ENCODE measurements at regions of chr10 and their contacts with region 1.

Region 1: GRCh38 chr10:89553064-89553734 is 17.8 kb upstream of the SLC16A12 start:
- DNase-seq: peak; percentile 84
- H3K4me3 Mint-ChIP-seq: no peak overlapping the region
- H3K27ac Mint-ChIP-seq: peak overlapping the region; percentile 90
- H3K4me1 Mint-ChIP-seq: peaks cover 47% of the 10 kb centered on the region
- H3K27me3 Mint-ChIP-seq: no peaks in the 10 kb centered on the region
- CTCF ChIP-seq: no peak

Region 2: GRCh38 chr10:89426230-89426868 is 126.8 kb before region 1 on chr10:
- CTCF ChIA-PET with region 1: interaction called, 16 read pairs
- POLR2A ChIA-PET with region 1: interaction called, 9 read pairs
- intact Hi-C with region 1: loop called (anchors 1 kb)
- DNase-seq: peak; percentile 70
- H3K4me3 Mint-ChIP-seq: no peak overlapping the region
- H3K27ac Mint-ChIP-seq: no peak overlapping the region
- H3K4me1 Mint-ChIP-seq: peaks cover 26% of the 10 kb centered on the region
- H3K27me3 Mint-ChIP-seq: no peaks in the 10 kb centered on the region
- CTCF ChIP-seq: peak; percentile 74

Region 3: DNA sequence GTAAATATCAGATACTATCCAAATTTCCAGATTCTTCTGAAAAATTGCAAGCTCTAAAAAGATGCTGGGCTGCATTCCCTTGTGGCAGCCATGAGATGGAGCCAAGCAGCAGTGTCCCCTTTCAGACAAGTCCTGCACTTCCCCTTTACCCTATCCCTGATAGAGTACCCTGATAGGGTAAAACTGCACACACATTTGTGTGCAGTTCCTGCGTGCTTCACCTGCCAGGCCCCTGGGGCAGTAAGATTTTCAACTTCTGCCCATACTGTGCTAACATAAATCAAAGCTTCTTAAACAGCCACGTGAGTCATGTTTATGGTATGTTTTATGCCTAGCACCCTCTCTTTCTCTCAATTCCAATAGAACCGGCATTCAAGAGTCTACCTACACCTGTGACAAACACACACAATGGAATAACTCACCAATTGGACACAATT is 86.6 kb before region 1 on chr10:
- CTCF ChIA-PET with region 1: interaction called, 65 read pairs
- POLR2A ChIA-PET with region 1: interaction called, 48 read pairs
- intact Hi-C with region 1: no loop called
- DNase-seq: peak; percentile 77
- H3K4me3 Mint-ChIP-seq: no peak overlapping the region
- H3K27ac Mint-ChIP-seq: peak overlapping the region; percentile 68
- H3K4me1 Mint-ChIP-seq: peaks cover 37% of the 10 kb centered on the region
- H3K27me3 Mint-ChIP-seq: no peaks in the 10 kb centered on the region
- CTCF ChIP-seq: peak; percentile 43

Region 4: GRCh38 chr10:89481662-89482061 is 71.5 kb before region 1 on chr10:
- CTCF ChIA-PET with region 1: no interaction called
- POLR2A ChIA-PET with region 1: interaction called, 22 read pairs
- intact Hi-C with region 1: no loop called
- DNase-seq: peak; percentile 86
- H3K4me3 Mint-ChIP-seq: peak overlapping the region; percentile 28
- H3K27ac Mint-ChIP-seq: peak overlapping the region; percentile 99
- H3K4me1 Mint-ChIP-seq: peaks cover 52% of the 10 kb centered on the region
- H3K27me3 Mint-ChIP-seq: no peaks in the 10 kb centered on the region
- CTCF ChIP-seq: no peak

Region 5: DNA sequence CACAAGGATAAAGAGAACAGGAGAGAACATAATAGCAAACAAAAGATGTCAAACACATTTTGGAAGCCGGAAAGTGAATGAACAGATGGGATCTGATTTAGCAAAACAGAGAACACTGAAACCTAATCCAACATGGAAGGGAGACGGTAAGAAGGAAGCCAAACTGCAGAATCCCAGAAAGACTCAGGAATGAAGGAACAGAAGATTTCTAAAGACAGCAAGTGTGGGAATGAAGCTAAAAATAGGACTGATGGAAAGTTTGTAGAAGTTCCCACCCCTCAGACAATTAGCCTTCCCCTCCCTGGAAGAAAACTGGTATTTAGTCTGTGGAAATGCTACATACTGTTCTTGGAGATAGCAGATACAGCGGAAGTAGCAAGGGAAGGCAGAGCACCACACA is 58.6 kb before region 1 on chr10:
- CTCF ChIA-PET with region 1: no interaction called
- POLR2A ChIA-PET with region 1: no interaction called
- intact Hi-C with region 1: loop called (anchors 5 kb)
- DNase-seq: no peak
- H3K4me3 Mint-ChIP-seq: no peak overlapping the region
- H3K27ac Mint-ChIP-seq: no peak overlapping the region
- H3K4me1 Mint-ChIP-seq: no peaks in the 10 kb centered on the region
- H3K27me3 Mint-ChIP-seq: no peaks in the 10 kb centered on the region
- CTCF ChIP-seq: no peak

Region 6: GRCh38 chr10:89502556-89502955 is 50.6 kb before region 1 on chr10:
- CTCF ChIA-PET with region 1: interaction called, 5 read pairs
- POLR2A ChIA-PET with region 1: interaction called, 11 read pairs
- intact Hi-C with region 1: no loop called
- DNase-seq: peak; percentile 91
- H3K4me3 Mint-ChIP-seq: no peak overlapping the region
- H3K27ac Mint-ChIP-seq: peak overlapping the region; percentile 43
- H3K4me1 Mint-ChIP-seq: peaks cover 25% of the 10 kb centered on the region
- H3K27me3 Mint-ChIP-seq: no peaks in the 10 kb centered on the region
- CTCF ChIP-seq: no peak

Region 7: DNA sequence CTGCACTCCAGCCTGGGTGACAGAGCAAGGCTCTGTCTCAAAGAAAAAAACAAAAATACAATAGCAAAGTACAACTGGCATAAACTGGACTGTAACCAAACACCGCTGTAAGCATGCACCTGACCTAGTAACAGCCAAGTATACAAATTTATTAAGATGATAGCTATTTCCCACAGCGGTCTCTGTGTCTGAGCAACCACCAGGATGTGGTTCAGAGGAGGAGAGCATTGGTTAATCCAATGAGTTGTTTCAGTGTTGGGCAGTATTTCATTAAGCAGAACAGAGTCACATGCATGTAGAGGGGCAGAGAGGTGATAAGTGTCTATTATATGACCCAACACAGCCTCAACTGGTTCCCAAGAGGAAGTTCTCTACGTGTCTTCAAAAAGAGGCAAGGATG is 21.8 kb before region 1 on chr10:
- CTCF ChIA-PET with region 1: interaction called, 3 read pairs
- POLR2A ChIA-PET with region 1: interaction called, 36 read pairs
- intact Hi-C with region 1: no loop called
- DNase-seq: no peak
- H3K4me3 Mint-ChIP-seq: no peak overlapping the region
- H3K27ac Mint-ChIP-seq: no peak overlapping the region
- H3K4me1 Mint-ChIP-seq: peaks cover 13% of the 10 kb centered on the region
- H3K27me3 Mint-ChIP-seq: no peaks in the 10 kb centered on the region
- CTCF ChIP-seq: no peak